WTC11 (cell line): ENCODE measurements at regions of chr11 and their contacts with region 1.

Region 1: GRCh38 chr11:33987975-33988580 is 63.5 kb upstream of the CAPRIN1 start:
- DNase-seq: peak; percentile 82
- ATAC-seq: peak; percentile 99
- H3K4me3 Mint-ChIP-seq: no peak overlapping the region
- H3K27ac Mint-ChIP-seq: no peak overlapping the region
- H3K4me1 Mint-ChIP-seq: no peaks in the 10 kb centered on the region
- H3K27me3 Mint-ChIP-seq: no peaks in the 10 kb centered on the region
- CTCF ChIP-seq: peak; percentile 80

Region 2: GRCh38 chr11:33869481-33870422 is 118.3 kb before region 1 on chr11:
- CTCF ChIA-PET with region 1: interaction called, 15 read pairs
- POLR2A ChIA-PET with region 1: interaction called, 3 read pairs
- DNase-seq: peak; percentile 43
- ATAC-seq: peak; percentile 63
- H3K4me3 Mint-ChIP-seq: peak overlapping the region; percentile 92
- H3K27ac Mint-ChIP-seq: no peak overlapping the region
- H3K4me1 Mint-ChIP-seq: peaks cover 24% of the 10 kb centered on the region
- H3K27me3 Mint-ChIP-seq: peaks cover 74% of the 10 kb centered on the region
- CTCF ChIP-seq: no peak

Region 3: GRCh38 chr11:33935461-33936456 is 52.3 kb before region 1 on chr11:
- CTCF ChIA-PET with region 1: interaction called, 10 read pairs
- POLR2A ChIA-PET with region 1: no interaction called
- DNase-seq: no peak
- ATAC-seq: no peak; the same call in 1 of the 2 replicates
- H3K4me3 Mint-ChIP-seq: no peak overlapping the region
- H3K27ac Mint-ChIP-seq: no peak overlapping the region
- H3K4me1 Mint-ChIP-seq: peaks cover 26% of the 10 kb centered on the region
- H3K27me3 Mint-ChIP-seq: peaks cover 9% of the 10 kb centered on the region
- CTCF ChIP-seq: no peak

Region 4: DNA sequence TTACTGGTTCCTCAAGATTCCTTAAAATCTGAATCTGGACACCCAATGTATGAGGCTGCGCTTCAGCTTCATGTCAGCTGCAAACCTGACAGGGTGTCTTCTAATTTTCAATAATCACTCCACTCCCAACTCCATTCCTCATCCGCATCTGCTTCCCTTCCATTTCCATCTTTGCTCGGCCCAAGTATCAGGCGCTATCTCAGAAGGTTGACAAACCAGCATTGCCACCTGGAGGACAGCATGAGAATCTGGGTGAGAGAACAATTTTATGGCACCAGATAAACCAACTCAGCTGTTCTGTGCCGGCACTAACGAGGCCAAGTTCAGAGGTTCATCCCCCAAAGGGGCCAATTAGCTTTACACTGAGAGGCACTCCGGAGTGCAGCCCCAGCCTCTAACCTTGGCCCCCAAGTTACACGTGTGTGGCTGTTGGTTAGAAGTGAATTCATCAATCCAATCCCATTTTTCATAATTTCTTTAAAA is 17.1 kb before region 1 on chr11:
- CTCF ChIA-PET with region 1: interaction called, 32 read pairs
- POLR2A ChIA-PET with region 1: no interaction called
- DNase-seq: peak; percentile 41
- ATAC-seq: peak; percentile 91
- H3K4me3 Mint-ChIP-seq: no peak overlapping the region
- H3K27ac Mint-ChIP-seq: no peak overlapping the region
- H3K4me1 Mint-ChIP-seq: 0 out of 2 replicates have a peak, but pooled peaks cover 2% of the 10 kb centered on the region
- H3K27me3 Mint-ChIP-seq: peaks cover 3% of the 10 kb centered on the region; the same call in 1 of the 2 replicates
- CTCF ChIP-seq: peak; percentile 28; the same call in 1 of the 2 replicates

Region 5: GRCh38 chr11:33976495-33977199 is 11.4 kb before region 1 on chr11:
- CTCF ChIA-PET with region 1: interaction called, 32 read pairs
- POLR2A ChIA-PET with region 1: no interaction called
- DNase-seq: no peak
- ATAC-seq: no peak
- H3K4me3 Mint-ChIP-seq: no peak overlapping the region
- H3K27ac Mint-ChIP-seq: no peak overlapping the region
- H3K4me1 Mint-ChIP-seq: no peaks in the 10 kb centered on the region
- H3K27me3 Mint-ChIP-seq: no peaks in the 10 kb centered on the region
- CTCF ChIP-seq: no peak